Caco-2 (cell line): ENCODE measurements at regions of chr11 and their contacts with region 1.

Region 1: GRCh38 chr11:77047007-77047927 is 13.1 kb downstream of the B3GNT6 start:
- DNase-seq: peak; percentile 92 to 94
- H3K4me3 ChIP-seq: peak overlapping the region; percentile 41
- H3K4me3 Mint-ChIP-seq: peak overlapping the region; percentile 65
- H3K27ac Mint-ChIP-seq: peak overlapping the region; percentile 49
- H3K4me1 ChIP-seq: peaks cover 9% of the 10 kb centered on the region; the same call in 1 of the 2 replicates
- H3K4me1 Mint-ChIP-seq: peaks cover 15% of the 10 kb centered on the region
- H3K27me3 ChIP-seq: no peaks in the 10 kb centered on the region
- H3K27me3 Mint-ChIP-seq: no peaks in the 10 kb centered on the region
- CTCF ChIP-seq: peak; percentile 81 to 82

Region 2: GRCh38 chr11:76734456-76735420 is 312.5 kb before region 1 on chr11:
- CTCF ChIA-PET with region 1: interaction called, 7 read pairs
- POLR2A ChIA-PET with region 1: no interaction called
- intact Hi-C with region 1: loop called (anchors 1 kb)
- DNase-seq: no peak
- H3K4me3 ChIP-seq: no peak overlapping the region
- H3K4me3 Mint-ChIP-seq: no peak overlapping the region
- H3K27ac Mint-ChIP-seq: no peak overlapping the region
- H3K4me1 ChIP-seq: peaks cover 11% of the 10 kb centered on the region
- H3K4me1 Mint-ChIP-seq: peaks cover 9% of the 10 kb centered on the region
- H3K27me3 ChIP-seq: no peaks in the 10 kb centered on the region; the same call in 1 of the 2 replicates
- H3K27me3 Mint-ChIP-seq: no peaks in the 10 kb centered on the region
- CTCF ChIP-seq: no peak

Region 3: DNA sequence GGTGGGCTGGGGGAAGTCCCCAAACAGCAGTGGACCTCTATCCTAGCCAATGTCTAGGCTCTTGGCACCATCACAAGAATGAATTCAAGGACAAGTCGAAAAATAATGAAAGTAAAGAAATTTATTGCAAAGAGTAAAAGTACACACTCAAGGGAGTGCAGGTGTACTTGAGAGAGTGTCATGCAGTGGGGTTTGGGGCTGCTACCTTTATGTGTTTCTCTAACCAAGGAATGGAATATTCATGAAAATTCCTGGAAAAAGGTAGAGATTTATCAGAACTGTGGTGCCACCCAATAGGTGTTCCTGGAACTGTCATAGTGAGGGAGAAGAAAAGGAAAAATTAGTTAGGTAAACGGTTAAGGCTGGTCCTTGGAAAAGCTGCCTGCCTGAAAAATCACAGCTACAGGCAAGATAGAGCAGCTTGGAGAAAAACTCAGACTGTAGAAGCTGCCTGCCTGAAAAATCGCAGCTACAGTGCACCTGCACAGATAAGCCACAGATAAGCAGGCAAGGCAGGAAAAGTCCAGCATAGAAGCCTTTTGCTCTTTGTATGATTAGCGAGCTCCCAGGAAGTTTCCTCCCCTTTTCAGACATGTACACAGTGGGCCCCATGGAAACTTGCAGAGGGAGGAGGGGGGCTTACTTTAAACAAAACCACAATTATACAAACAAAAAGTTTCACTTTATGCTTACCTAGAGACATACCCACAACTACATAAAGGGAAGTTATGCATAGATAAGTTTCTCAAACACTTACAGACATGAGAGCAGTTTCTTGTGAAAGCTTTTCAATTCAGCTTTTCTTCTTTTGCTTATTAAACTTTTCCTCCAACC is 84.5 kb before region 1 on chr11:
- CTCF ChIA-PET with region 1: interaction called, 14 read pairs
- POLR2A ChIA-PET with region 1: no interaction called
- intact Hi-C with region 1: loop called (anchors 1 kb)
- DNase-seq: peak; percentile 89 to 92
- H3K4me3 ChIP-seq: no peak overlapping the region
- H3K4me3 Mint-ChIP-seq: peak overlapping the region; percentile 53
- H3K27ac Mint-ChIP-seq: peak overlapping the region; percentile 92
- H3K4me1 ChIP-seq: peaks cover 22% of the 10 kb centered on the region
- H3K4me1 Mint-ChIP-seq: peaks cover 30% of the 10 kb centered on the region
- H3K27me3 ChIP-seq: no peaks in the 10 kb centered on the region
- H3K27me3 Mint-ChIP-seq: no peaks in the 10 kb centered on the region
- CTCF ChIP-seq: no peak

Region 4: DNA sequence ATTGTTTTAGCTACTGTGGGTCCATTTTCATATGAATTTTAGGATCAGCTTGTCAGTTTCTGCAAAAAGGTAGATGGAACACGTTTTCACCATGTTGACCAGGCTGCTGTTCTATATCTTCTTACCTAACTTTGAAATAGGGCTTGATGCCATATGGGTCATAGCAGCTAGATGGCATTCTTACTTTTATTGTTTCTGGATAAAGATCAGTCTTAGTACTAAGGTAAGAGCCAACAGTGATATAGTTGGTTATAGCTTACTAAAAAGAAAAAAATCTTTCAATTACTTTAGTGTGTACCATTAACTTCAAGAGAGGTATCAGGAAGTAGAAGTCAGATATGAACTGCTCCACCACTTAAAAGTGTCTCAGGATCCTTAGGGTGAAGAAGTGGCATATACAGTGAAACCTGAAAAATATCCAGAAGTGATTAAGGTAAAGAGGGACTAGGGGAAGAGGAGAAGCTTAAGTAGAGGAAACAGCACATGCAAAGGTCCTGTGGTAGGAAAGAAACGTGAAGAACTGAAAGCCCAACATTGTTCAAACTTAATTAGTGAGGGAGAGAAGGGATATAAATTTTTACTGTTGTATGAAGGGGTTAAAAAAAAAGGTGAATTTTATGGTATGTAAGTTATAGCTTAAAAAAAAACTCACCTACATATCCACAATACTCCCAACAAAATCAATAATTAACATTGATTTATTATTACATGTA is 72.9 kb before region 1 on chr11:
- CTCF ChIA-PET with region 1: no interaction called
- POLR2A ChIA-PET with region 1: no interaction called
- intact Hi-C with region 1: no loop called
- DNase-seq: no peak
- H3K4me3 ChIP-seq: no peak overlapping the region
- H3K4me3 Mint-ChIP-seq: no peak overlapping the region
- H3K27ac Mint-ChIP-seq: no peak overlapping the region
- H3K4me1 ChIP-seq: no peaks in the 10 kb centered on the region
- H3K4me1 Mint-ChIP-seq: no peaks in the 10 kb centered on the region
- H3K27me3 ChIP-seq: no peaks in the 10 kb centered on the region
- H3K27me3 Mint-ChIP-seq: no peaks in the 10 kb centered on the region
- CTCF ChIP-seq: no peak

Region 5: DNA sequence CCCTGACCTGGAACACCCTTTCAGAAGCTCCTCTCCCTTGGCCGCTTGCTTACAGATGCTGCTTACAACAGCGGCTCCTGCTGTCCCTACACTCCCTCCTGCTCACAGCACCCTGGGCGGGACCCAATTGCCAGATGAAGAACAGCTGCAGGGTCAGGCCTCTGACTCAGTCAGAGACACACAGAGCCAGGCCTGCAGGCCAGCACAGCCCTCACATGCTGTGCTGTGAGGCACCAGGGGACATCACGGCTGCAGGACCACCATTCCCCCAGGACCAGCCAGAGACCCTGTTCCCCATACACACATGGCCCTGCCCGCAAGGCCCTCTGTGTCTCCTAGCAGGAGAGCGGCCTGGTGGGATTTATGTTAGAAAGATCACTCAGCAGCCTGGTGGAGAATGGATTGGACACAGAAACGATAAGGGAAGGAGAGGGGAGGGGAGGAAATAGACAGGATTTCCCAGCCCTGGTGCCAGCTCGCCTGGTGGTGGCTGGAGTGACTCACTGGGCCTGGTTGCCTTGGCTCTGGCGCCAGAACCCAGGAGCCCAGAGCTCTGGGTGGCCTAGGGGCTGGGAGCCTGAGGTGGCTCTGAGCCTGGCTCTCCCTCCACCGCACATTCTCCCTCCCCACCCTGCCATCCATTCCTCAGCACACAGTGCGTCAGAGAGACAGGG is 26.2 kb after region 1 on chr11:
- CTCF ChIA-PET with region 1: interaction called, 10 read pairs
- POLR2A ChIA-PET with region 1: no interaction called
- intact Hi-C with region 1: loop called (anchors 2 kb)
- DNase-seq: peak; percentile 37 to 57
- H3K4me3 ChIP-seq: no peak overlapping the region
- H3K4me3 Mint-ChIP-seq: no peak overlapping the region
- H3K27ac Mint-ChIP-seq: no peak overlapping the region
- H3K4me1 ChIP-seq: peaks cover 10% of the 10 kb centered on the region
- H3K4me1 Mint-ChIP-seq: peaks cover 21% of the 10 kb centered on the region
- H3K27me3 ChIP-seq: no peaks in the 10 kb centered on the region
- H3K27me3 Mint-ChIP-seq: no peaks in the 10 kb centered on the region
- CTCF ChIP-seq: peak in 1 of 2 experiments; percentile 5

Region 6: GRCh38 chr11:77101052-77101537 is 53.8 kb after region 1 on chr11:
- CTCF ChIA-PET with region 1: interaction called, 10 read pairs
- POLR2A ChIA-PET with region 1: no interaction called
- intact Hi-C with region 1: no loop called
- DNase-seq: peak in 1 of 2 experiments; percentile 56
- H3K4me3 ChIP-seq: no peak overlapping the region
- H3K4me3 Mint-ChIP-seq: no peak overlapping the region
- H3K27ac Mint-ChIP-seq: no peak overlapping the region
- H3K4me1 ChIP-seq: no peaks in the 10 kb centered on the region
- H3K4me1 Mint-ChIP-seq: no peaks in the 10 kb centered on the region
- H3K27me3 ChIP-seq: no peaks in the 10 kb centered on the region
- H3K27me3 Mint-ChIP-seq: no peaks in the 10 kb centered on the region
- CTCF ChIP-seq: peak; percentile 61 to 62

Region 7: GRCh38 chr11:77175021-77175842 is 128.0 kb after region 1 on chr11:
- CTCF ChIA-PET with region 1: no interaction called
- POLR2A ChIA-PET with region 1: interaction called, 3 read pairs
- intact Hi-C with region 1: loop called (anchors 5 kb)
- DNase-seq: no peak
- H3K4me3 ChIP-seq: no peak overlapping the region
- H3K4me3 Mint-ChIP-seq: no peak overlapping the region
- H3K27ac Mint-ChIP-seq: no peak overlapping the region
- H3K4me1 ChIP-seq: peaks cover 29% of the 10 kb centered on the region
- H3K4me1 Mint-ChIP-seq: peaks cover 23% of the 10 kb centered on the region
- H3K27me3 ChIP-seq: no peaks in the 10 kb centered on the region
- H3K27me3 Mint-ChIP-seq: no peaks in the 10 kb centered on the region
- CTCF ChIP-seq: no peak